Endothelial cell of umbilical vein (primary cell): ENCODE measurements at regions of chr9 and their contacts with region 1.

Region 1: DNA sequence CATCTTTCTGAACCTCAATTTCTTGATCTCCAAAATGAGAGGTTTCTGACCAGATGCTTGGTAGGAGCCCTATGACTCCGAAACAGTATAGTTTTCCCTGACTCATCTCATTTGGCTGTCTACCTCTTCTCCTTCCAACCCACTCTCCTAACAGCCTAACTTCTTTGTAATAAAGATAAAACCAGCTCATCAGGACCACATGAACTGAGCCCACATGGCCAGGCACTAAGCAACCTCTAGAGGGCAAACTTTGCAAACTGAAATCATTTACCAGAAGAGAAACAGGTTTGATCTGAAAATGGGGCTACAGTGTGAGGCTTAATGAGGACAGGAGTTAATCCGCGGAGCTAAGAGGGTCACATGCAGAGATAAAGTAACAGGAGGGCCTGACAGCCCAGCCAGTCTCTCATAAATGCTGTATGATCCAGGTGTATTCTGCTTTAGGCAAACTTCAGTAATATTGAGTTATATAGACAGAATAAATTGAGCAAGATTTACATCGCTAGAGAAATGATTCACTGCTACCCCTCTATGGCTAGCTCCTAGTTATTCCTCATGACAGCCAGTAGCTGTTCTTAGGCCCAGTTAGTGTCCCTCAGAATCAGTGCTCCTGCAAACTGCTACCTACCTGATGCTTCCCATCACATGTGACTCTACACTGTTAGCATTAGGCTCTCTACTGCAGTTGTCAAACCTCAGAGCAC is 64.6 kb downstream of the ABCA1 start:
- DNase-seq: peak; percentile 78
- H3K4me3 ChIP-seq: no peak overlapping the region
- H3K27ac ChIP-seq: no peak overlapping the region
- H3K4me1 ChIP-seq: peaks cover 3% of the 10 kb centered on the region
- H3K27me3 ChIP-seq: no peaks in the 10 kb centered on the region
- CTCF ChIP-seq: peak; percentile 81
- POLR2A ChIP-seq: no peak

Region 2: DNA sequence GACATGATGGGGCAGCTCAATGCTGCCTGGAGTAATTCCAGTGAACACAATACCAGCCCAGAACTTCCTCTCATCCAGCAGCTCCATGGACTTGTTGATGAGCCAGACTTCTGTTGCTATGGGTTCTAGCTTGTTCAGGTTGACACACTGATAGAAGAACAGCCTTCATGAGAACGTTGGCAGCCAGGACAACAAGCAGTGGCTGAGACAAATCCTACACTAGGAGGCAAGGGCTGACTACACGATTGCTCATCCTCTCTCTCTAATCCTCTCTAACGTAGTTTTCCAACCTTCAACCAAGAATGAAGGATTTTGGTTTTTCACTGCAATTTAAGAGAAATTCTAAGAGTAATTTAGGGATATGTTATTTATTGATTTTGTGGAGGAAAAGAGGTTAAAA is 31.7 kb before region 1 on chr9:
- CTCF ChIA-PET with region 1: interaction called, 11 read pairs
- POLR2A ChIA-PET with region 1: interaction called, 4 read pairs
- dilution Hi-C with region 1: no loop called
- intact Hi-C with region 1: no loop called
- DNase-seq: no peak
- H3K4me3 ChIP-seq: no peak overlapping the region
- H3K27ac ChIP-seq: peak overlapping the region; percentile 15
- H3K4me1 ChIP-seq: peaks cover 45% of the 10 kb centered on the region
- H3K27me3 ChIP-seq: no peaks in the 10 kb centered on the region
- CTCF ChIP-seq: no peak
- POLR2A ChIP-seq: no peak

Region 3: DNA sequence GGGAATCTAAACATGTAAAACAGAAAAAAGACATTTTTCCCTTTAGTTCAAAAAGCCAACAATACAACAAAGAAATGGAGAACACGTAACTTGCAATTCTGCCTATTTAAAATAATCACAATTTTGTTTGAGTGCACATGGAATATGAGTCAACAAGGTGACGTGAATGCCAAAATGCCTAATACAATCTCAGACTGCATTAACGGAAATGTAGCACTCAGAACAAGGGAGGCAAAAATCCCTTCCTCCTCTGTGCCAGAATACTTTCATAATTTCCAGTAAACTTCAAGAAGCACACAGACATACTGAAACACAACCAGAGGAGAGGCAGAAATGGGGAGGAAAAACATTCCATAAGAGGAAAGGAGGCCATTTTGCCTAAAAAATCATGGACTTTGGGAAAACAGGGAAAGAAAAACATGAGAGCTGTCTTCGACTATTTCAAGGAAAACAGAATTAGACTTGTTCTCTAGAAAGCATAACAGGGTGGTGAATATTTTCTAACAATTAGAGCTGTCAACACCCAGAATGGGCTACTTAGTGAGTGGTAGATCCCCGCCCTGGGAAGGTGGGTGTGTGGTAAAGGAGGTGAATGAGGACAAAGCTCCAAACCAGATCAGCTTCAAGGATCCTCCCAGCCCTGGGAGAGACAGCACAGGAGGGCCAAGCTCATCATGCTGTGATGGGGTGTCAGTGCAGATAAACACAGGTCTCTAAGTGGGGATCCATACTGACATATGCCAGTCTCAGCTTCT is 16.4 kb after region 1 on chr9:
- CTCF ChIA-PET with region 1: interaction called, 24 read pairs
- POLR2A ChIA-PET with region 1: no interaction called
- dilution Hi-C with region 1: no loop called
- intact Hi-C with region 1: no loop called
- DNase-seq: peak; percentile 82
- H3K4me3 ChIP-seq: no peak overlapping the region
- H3K27ac ChIP-seq: peak overlapping the region; percentile 59
- H3K4me1 ChIP-seq: peaks cover 9% of the 10 kb centered on the region
- H3K27me3 ChIP-seq: no peaks in the 10 kb centered on the region
- CTCF ChIP-seq: no peak
- POLR2A ChIP-seq: no peak

Region 4: DNA sequence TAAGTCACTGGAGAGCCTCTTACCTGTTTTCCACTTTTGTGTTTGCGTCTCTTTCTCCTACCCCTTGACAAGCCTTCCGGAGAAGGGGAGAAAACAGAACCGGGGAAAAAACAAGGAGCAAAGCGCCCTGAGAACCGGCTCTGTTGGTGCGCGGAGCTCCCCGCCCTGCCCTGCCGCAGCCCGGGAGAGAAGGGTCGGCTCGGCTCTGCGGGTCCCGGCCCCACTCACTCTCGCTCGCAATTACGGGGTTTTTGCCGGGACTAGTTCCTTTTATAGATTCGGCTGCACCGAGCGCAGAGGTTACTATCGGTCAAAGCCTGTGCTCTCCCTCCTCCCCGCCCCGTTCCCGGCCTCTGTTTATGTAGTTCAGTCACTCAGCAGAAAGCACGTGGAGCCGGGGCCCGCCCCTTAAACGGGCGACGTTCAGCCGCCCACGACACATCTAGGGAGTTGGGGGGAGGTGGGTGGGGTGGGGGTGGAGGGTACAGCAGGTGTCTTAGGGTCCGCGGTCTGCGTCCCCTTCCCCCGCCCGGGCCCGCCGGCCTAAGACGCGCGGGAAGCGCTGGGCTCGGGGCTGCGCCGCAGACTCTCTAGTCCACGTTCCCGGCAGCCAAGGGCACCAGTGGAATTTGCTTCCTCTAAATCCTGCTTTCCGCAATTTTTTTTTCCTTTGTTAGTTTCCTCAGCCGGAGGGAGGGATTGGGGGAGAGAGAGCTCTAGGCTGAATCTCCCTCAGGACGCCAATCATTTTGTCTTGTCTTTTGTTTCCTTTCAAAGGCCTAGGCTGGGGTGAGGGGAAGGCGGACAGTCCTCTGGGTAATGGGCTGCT is 64.8 kb after region 1 on chr9 and contains the start of gene ABCA1:
- CTCF ChIA-PET with region 1: interaction called, 67 read pairs
- POLR2A ChIA-PET with region 1: interaction called, 6 read pairs
- dilution Hi-C with region 1: no loop called
- intact Hi-C with region 1: loop called (anchors 1 kb)
- DNase-seq: peak; percentile 82
- H3K4me3 ChIP-seq: peak within 1 kb of the TSS; percentile 22 to 93 (median 53)
- H3K27ac ChIP-seq: no peak within 1 kb of the TSS
- H3K4me1 ChIP-seq: peaks cover 8% of the 10 kb centered on the region
- H3K27me3 ChIP-seq: no peaks in the 10 kb centered on the region
- CTCF ChIP-seq: no peak
- POLR2A ChIP-seq: no peak
- total RNA-seq, gene ABCA1: 6.6 and 9.8 TPM in 2 replicates

Region 5: GRCh38 chr9:105157130-105157583 is 293.8 kb after region 1 on chr9:
- CTCF ChIA-PET with region 1: interaction called, 52 read pairs
- POLR2A ChIA-PET with region 1: no interaction called
- dilution Hi-C with region 1: no loop called
- intact Hi-C with region 1: loop called (anchors 1 kb)
- DNase-seq: peak; percentile 63
- H3K4me3 ChIP-seq: no peak overlapping the region
- H3K27ac ChIP-seq: no peak overlapping the region
- H3K4me1 ChIP-seq: no peaks in the 10 kb centered on the region
- H3K27me3 ChIP-seq: no peaks in the 10 kb centered on the region
- CTCF ChIP-seq: peak; percentile 22 to 40
- POLR2A ChIP-seq: no peak